Heart left ventricle (tissue), 16 donors: ENCODE measurements at regions of chr14 and their contacts with region 1.

Region 1: GRCh38 chr14:73728717-73729330 is 14.6 kb upstream of the PNMA1 start:
- DNase-seq: peak; percentile 86 to 91 (median 88)
- ATAC-seq: peak; percentile 64 to 80 (median 76)
- H3K4me3 ChIP-seq: no peak overlapping the region
- H3K27ac ChIP-seq: peak overlapping the region in 10 of 12 donors; percentile 22 to 84 (median 60)
- H3K4me1 ChIP-seq: peaks cover 0 to 79% (median 57%) of the 10 kb centered on the region in 12 donors
- H3K27me3 ChIP-seq: no peaks in the 10 kb centered on the region
- CTCF ChIP-seq: peak; percentile 90 to 98 (median 96)
- POLR2A ChIP-seq: no peak

Region 2: DNA sequence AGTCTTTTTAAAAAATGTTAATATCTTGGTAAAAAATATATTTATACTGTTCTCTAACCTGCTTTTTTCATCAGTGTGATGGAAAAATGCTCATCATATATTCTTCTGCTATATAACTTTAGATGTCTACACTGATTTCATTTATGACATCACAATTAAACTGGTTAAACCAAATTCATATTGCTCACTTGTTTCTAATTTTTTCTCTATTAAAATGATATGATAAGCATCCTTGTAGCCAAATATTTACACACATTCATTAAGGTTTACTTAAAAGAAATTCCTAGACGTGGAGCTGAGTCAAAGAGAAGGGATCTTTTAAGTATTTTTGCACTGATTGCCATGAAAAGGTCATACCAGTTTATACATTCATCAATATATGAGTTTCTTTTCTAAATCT is 163.9 kb before region 1 on chr14:
- intact Hi-C with region 1: no loop called
- DNase-seq: no peak
- ATAC-seq: no peak
- H3K4me3 ChIP-seq: no peak overlapping the region
- H3K27ac ChIP-seq: no peak overlapping the region
- H3K4me1 ChIP-seq: peaks cover 0 to 29% (median 18%) of the 10 kb centered on the region in 12 donors
- H3K27me3 ChIP-seq: no peaks in the 10 kb centered on the region
- CTCF ChIP-seq: no peak
- POLR2A ChIP-seq: no peak

Region 3: DNA sequence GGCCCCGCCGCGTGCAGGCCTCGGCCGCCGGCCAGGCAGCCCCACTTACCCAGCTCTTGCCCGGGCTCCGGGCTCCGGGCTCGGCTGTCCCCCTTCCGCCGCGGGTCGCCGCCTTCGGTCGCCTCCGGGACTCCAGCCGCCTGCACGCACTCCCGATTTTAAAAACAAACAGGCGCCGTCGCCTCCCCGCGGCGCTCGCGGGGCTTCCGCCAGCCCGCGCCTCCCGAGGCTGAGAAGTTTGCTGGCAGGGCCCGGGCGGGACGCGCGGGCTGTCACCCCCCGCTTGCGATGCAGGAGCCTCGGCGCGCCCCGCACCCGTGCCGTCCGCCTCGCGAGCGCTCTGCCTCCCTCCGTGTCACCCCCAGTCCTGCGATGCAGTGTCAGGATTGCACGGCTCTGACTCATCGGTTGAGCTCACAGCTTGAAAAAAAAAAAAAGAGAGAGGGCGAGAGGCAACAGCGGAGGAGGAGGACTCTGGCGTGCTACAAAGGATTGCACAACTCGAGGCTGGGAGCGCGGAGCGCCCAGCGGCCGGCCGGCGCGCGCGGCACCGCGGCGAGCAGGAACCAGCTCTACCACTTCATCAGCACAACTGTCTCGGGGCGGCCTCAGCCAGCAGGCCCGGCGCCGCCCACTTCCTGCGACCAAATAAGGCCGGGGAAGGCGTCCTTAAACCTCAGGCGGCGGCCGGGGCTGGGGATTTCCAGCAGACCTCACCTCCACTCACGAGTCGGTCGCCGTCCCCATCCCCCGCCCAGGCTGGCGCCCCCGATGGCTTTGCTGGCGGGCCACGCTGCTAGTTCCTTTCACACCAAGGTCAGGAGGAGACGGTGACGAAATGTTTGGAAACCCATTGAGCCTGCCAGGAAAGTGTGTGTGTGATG is 31.1 kb after region 1 on chr14:
- intact Hi-C with region 1: loop called in 2 of 10 experiments (anchors 2 kb)
- DNase-seq: peak; percentile 96 to 97 (median 97)
- ATAC-seq: peak; percentile 55 to 89 (median 86)
- H3K4me3 ChIP-seq: peak overlapping the region; percentile 64 to 95 (median 79)
- H3K27ac ChIP-seq: peak overlapping the region; percentile 89 to 100 (median 98)
- H3K4me1 ChIP-seq: peaks cover 34 to 96% (median 86%) of the 10 kb centered on the region in 12 donors
- H3K27me3 ChIP-seq: no peaks in the 10 kb centered on the region
- CTCF ChIP-seq: peak in 3 of 12 donors; percentile 8 to 32 (median 32)
- POLR2A ChIP-seq: peak in 1 of 2 donors; percentile 68

Region 4: DNA sequence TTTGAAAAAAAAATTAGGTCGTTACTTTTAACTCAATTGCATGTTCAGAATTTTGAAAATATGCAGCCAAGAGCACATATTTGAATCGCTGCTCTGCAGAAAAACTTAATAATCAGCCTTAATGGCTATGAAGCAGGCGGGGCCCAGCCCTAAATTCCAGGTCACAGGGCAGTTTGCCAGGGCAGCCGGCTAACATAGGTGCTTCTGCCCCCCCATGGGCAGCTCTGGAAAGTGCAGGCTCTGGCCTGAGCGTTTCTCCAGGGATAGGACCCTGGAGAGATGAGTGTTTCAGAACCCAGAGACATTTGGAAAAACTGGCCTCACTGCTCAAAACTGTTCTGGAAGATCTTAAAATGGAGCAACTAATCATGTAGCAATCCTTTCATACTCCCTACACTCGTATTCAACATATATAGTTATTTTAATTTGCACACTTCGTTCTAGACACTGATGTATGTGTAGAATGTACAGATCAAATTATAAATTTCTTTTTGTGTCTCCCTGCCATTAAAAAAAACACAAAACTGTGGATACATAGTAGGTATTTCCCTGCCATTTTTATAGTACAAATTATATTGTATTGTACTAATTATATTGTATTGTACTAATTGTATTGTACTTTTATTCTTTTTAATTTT is 96.8 kb after region 1 on chr14:
- intact Hi-C with region 1: loop called (anchors 1 to 2 kb)
- DNase-seq: peak; percentile 88 to 95 (median 92)
- ATAC-seq: peak; percentile 90 to 98 (median 96)
- H3K4me3 ChIP-seq: no peak overlapping the region
- H3K27ac ChIP-seq: peak overlapping the region in 1 of 12 donors; percentile 10
- H3K4me1 ChIP-seq: peaks cover 0 to 21% (median 7%) of the 10 kb centered on the region in 12 donors
- H3K27me3 ChIP-seq: no peaks in the 10 kb centered on the region
- CTCF ChIP-seq: peak; percentile 85 to 98 (median 94)
- POLR2A ChIP-seq: no peak

Region 5: GRCh38 chr14:73886449-73887317 is 157.9 kb after region 1 on chr14 and contains the start of gene ZNF410:
- intact Hi-C with region 1: loop called in 2 of 10 experiments (anchors 5 kb)
- DNase-seq: peak; percentile 94 to 97 (median 96)
- ATAC-seq: peak; percentile 99 to 100 (median 100)
- H3K4me3 ChIP-seq: peak within 1 kb of the TSS; percentile 54 to 97 (median 90)
- H3K27ac ChIP-seq: peak within 1 kb of the TSS; percentile 83 to 98 (median 94)
- H3K4me1 ChIP-seq: peaks cover 0 to 34% (median 19%) of the 10 kb centered on the region in 12 donors
- H3K27me3 ChIP-seq: no peaks in the 10 kb centered on the region
- CTCF ChIP-seq: no peak
- POLR2A ChIP-seq: peak in 1 of 2 donors; percentile 74
- total RNA-seq, gene ZNF410: 14.7 to 29.0 (median 20.1) TPM